BJ (cell line): ENCODE measurements at regions of chr19 and their contacts with region 1.

Region 1: DNA sequence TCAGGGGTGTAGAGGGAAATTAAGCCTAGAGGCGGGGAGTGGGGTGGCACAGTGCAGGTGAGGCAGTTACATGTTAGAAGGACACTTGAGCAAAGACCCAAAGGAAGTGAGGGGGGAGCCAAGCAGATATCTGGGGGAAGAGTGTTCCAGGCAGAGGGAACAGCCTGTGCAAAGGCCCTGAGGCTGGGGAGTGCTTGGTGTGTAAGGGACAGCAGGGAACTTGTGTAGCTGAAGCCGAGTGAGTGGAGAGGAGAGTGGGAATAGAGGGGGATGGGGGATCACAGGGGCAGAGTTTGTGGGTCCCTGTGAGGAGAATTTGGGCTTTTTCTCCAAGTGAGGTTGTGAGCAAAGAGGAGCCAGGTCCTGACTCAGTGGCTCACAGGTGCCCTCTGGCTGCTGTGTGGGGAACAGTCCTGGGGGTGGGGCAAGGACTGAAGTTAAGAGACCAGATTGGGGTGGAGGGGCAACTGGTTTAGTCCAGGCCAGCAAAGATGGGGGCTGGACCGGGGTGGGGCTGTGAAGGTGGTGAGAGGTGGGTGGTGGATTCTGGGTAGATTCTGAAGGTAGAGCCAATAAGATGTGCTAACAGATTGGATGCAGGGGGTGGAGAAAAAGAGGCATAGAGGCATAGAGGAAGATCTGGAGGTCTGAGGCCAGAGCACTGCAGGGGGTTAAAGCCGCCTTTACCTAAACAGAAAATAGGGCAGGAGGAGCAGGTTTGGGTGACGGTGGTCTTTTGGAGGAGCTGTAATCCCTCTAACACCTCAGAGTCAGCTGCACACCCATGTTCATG is 75.3 kb downstream of the CACNA1A start:
- DNase-seq: no peak
- H3K4me3 ChIP-seq: no peak overlapping the region
- H3K27me3 ChIP-seq: no peaks in the 10 kb centered on the region
- CTCF ChIP-seq: peak; percentile 94

Region 2: GRCh38 chr19:13277104-13277809 is 153.7 kb before region 1 on chr19:
- CTCF ChIA-PET with region 1: interaction called, 21 read pairs
- POLR2A ChIA-PET with region 1: no interaction called
- DNase-seq: peak; percentile 17
- H3K4me3 ChIP-seq: no peak overlapping the region
- H3K27me3 ChIP-seq: no peaks in the 10 kb centered on the region
- CTCF ChIP-seq: peak; percentile 51

Region 3: DNA sequence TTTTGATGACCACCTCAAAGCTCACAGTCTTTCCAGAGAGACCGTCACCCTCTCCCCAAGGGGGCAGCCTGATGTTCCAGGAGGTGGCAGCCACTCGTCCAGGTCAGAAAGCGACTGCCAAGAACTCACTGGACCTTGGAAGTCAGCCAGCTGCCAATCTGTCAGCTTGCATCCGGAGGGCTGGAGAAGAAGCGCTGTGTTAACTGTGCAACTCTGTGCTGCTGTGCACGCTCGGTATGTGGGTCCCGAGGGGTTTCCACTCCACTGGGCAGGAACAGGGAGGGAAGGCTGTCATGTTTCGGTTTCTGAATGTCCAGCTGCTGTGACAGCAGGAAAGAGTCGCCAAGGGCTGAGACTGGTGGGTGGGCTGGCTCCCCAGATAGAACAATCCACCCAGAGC is 13.9 kb before region 1 on chr19:
- CTCF ChIA-PET with region 1: interaction called, 12 read pairs
- POLR2A ChIA-PET with region 1: no interaction called
- DNase-seq: no peak
- H3K4me3 ChIP-seq: no peak overlapping the region
- H3K27me3 ChIP-seq: no peaks in the 10 kb centered on the region
- CTCF ChIP-seq: no peak